Left ventricle myocardium inferior (tissue), 1 donor: ENCODE measurements at regions of chr5 and their contacts with region 1.

Region 1: GRCh38 chr5:121968910-121969607 is 7.3 kb downstream of the SRFBP1 start:
- DNase-seq: no peak
- H3K4me3 ChIP-seq: no peak overlapping the region
- H3K27ac ChIP-seq: peak overlapping the region; percentile 17
- H3K4me1 ChIP-seq: peaks cover 26% of the 10 kb centered on the region
- H3K27me3 ChIP-seq: no peaks in the 10 kb centered on the region
- CTCF ChIP-seq: no peak

Region 2: GRCh38 chr5:122063836-122064235 is 94.8 kb after region 1 on chr5:
- intact Hi-C with region 1: no loop called
- DNase-seq: no peak
- H3K4me3 ChIP-seq: no peak overlapping the region
- H3K27ac ChIP-seq: no peak overlapping the region
- H3K4me1 ChIP-seq: no peaks in the 10 kb centered on the region
- H3K27me3 ChIP-seq: no peaks in the 10 kb centered on the region
- CTCF ChIP-seq: no peak

Region 3: DNA sequence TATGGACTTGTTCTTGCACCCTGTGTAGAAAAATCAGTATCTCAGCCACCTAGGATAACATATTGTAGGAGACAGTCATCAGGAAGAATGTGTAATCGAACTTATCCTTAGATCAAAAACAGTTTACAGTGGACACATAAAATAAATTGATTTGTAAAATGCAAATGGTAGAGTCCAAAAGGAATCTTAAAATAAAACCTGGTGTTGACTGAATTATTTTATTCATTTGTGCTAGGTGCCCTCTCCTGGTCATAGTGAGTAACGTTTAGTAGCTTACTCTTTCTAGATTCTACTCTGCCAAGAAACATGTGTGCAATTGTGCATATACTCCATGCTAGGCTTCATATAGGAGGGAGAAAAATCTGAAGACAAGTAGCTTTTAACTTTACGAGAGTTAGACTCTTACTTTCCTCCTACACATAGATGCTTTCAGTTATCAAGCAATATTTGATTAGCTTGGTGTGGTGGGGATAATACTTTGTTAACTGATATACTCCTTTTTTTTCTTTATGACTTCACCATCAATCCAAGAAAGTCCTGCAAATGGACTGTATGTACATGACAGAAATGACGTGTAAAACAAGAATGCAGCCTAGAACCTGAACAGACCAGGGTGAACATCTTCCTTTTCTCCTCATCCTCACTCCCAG is 132.7 kb after region 1 on chr5:
- intact Hi-C with region 1: loop called (anchors 10 kb)
- DNase-seq: no peak
- H3K4me3 ChIP-seq: no peak overlapping the region
- H3K27ac ChIP-seq: no peak overlapping the region
- H3K4me1 ChIP-seq: no peaks in the 10 kb centered on the region
- H3K27me3 ChIP-seq: no peaks in the 10 kb centered on the region
- CTCF ChIP-seq: peak; percentile 69

Region 4: DNA sequence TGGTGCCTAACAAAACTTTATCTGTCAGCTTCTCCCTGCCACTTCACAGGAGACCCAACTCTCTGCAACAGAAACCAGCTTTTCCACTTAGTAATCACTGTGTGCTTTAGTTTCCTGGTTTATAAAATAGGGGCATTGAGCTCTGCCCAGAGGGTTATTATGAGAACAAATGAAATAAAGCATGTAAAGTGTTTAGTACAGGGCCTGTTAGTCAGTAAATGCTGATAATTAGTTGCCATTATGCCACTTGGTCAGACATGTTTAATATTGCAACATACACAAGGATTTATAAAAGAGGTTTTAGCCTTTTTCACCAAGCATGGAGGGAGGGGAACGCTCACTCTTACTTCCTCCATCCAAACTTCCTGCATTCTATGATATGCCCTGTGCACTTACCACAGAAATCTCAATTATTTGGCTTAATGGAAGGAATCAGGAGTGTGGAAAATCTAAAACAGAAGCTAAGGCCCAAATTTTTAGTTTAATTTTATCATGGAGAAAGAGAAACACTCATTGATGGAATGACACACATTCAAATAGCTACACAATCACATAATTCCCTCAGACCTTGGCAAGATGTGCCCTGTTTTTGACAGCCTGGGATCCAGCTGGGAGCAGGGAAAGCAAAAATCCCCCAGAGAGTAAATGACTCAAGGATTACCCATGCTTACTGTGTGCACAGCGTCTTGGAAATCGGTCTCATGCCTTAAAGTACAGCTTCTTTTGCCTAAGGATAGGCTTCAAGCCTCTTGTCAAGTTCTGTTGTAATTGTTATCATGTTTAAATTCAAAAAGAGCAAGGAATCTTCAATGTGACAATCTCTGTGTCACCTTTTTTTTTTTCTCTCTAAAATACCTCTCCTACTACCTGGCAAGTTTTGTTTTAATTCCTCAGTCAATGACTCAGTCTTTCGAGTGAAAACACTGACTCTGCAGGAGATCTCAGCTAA is 194.3 kb after region 1 on chr5:
- intact Hi-C with region 1: no loop called
- DNase-seq: no peak
- H3K4me3 ChIP-seq: no peak overlapping the region
- H3K27ac ChIP-seq: peak overlapping the region; percentile 13
- H3K4me1 ChIP-seq: peaks cover 5% of the 10 kb centered on the region
- H3K27me3 ChIP-seq: no peaks in the 10 kb centered on the region
- CTCF ChIP-seq: no peak